Heart right ventricle (tissue), 16 donors: ENCODE measurements at regions of chr11 and their contacts with region 1.

Region 1: GRCh38 chr11:111788051-111788450 is 21.9 kb upstream of the PPP2R1B start:
- DNase-seq: peak; percentile 36 to 77
- ATAC-seq: peak; percentile 92 to 98 (median 94)
- H3K4me3 ChIP-seq: no peak overlapping the region
- H3K27ac ChIP-seq: peak overlapping the region; percentile 65 to 94 (median 86)
- H3K4me1 ChIP-seq: peaks cover 0 to 51% (median 12%) of the 10 kb centered on the region in 9 donors
- H3K27me3 ChIP-seq: no peaks in the 10 kb centered on the region
- CTCF ChIP-seq: no peak

Region 2: GRCh38 chr11:111399187-111400031 is 388.6 kb before region 1 on chr11:
- intact Hi-C with region 1: no loop called
- DNase-seq: no peak
- ATAC-seq: no peak
- H3K4me3 ChIP-seq: no peak overlapping the region
- H3K27ac ChIP-seq: no peak overlapping the region
- H3K4me1 ChIP-seq: no peaks in the 10 kb centered on the region
- H3K27me3 ChIP-seq: peaks cover 0 to 9% (median 0%) of the 10 kb centered on the region in 7 donors
- CTCF ChIP-seq: no peak

Region 3: GRCh38 chr11:111833524-111833923 is 45.5 kb after region 1 on chr11:
- intact Hi-C with region 1: loop called in 1 of 10 experiments (anchors 5 kb)
- DNase-seq: no peak
- ATAC-seq: peak in 3 of 8 donors; percentile 33 to 58 (median 58)
- H3K4me3 ChIP-seq: no peak overlapping the region
- H3K27ac ChIP-seq: peak overlapping the region in 1 of 10 donors; percentile 22
- H3K4me1 ChIP-seq: peaks cover 0 to 13% (median 3%) of the 10 kb centered on the region in 9 donors
- H3K27me3 ChIP-seq: no peaks in the 10 kb centered on the region
- CTCF ChIP-seq: peak in 7 of 9 donors; percentile 12 to 48 (median 38)